Kidney (tissue), 22 donors: ENCODE measurements at regions of chr3 and their contacts with region 1.

Region 1: GRCh38 chr3:156509189-156510174 is 45.4 kb downstream of the SSR3 start:
- DNase-seq: peak in 2 of 5 donors; percentile 72 to 78
- H3K4me3 ChIP-seq: no peak overlapping the region
- H3K27ac ChIP-seq: no peak overlapping the region
- H3K4me1 ChIP-seq: no peaks in the 10 kb centered on the region
- H3K27me3 ChIP-seq: no peaks in the 10 kb centered on the region
- CTCF ChIP-seq: peak; percentile 42

Region 2: DNA sequence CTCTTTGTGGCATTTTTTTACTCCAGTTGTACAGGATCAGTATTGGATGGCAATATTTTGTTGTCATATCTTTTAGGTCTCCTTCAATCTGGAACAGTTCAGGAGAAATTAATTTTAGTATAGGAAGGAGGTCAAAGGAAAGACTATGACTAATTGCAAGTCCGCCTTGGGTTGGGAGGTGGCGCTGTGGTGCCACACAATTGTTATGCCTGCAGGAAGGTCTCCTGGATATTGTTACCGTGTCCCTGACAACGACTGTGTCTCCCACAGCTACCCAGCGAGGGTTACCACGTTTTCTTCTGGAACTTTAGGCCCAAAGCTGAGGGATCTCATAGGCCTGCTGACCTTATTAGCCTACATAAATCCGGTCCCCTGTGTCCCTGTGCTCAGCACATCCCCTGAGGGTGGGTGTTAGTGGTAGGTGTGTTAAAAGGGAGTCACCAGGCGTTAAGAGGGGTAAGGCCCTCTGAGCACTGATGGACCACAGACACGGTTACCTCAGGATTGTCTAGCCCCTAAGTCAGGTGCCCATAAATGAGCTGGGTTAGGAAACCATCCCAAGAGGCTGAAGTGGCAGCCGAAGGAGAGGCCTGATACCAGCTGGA is 357.6 kb before region 1 on chr3:
- intact Hi-C with region 1: loop called (anchors 10 kb)
- DNase-seq: peak; percentile 77 to 89 (median 86)
- H3K4me3 ChIP-seq: no peak overlapping the region
- H3K27ac ChIP-seq: no peak overlapping the region
- H3K4me1 ChIP-seq: peaks cover 0 to 6% (median 0%) of the 10 kb centered on the region in 3 donors
- H3K27me3 ChIP-seq: no peaks in the 10 kb centered on the region
- CTCF ChIP-seq: peak; percentile 70